CD8-positive, alpha-beta T cell (primary cell): ENCODE measurements at regions of chr2 and their contacts with region 1.

Region 1: DNA sequence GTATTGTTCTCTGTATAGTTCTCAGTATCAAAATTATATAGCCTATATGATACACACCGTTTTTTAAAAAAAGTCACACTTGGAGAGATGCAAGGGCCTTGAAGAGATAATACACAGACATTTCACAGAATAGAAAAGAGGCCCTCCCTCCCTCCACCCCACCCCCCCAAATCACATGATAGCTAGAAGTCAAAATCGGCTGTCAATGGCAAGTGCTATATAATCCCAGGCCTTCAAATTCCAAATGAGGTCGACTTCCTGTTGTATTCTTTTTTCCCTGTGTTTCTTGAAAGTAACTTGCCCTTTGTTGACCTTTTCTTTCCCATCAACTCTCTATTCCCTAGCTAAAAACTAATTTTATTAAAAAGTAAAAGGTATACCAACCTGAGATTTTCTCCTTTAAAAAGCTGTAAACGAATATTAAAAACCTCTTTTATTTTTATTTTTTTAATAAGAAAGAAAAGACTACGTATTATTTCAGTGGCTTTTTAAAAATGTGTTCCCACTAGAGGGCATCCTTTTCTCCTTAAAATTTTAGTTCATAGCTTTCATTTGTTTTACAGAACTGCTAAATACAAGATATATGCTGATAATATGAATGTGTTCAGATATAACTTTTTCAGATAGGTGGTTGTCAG is 46.6 kb downstream of the KCMF1 start:
- DNase-seq: peak in 2 of 9 experiments; percentile 23 to 39
- ATAC-seq: no peak
- H3K4me3 ChIP-seq: no peak overlapping the region
- H3K4me3 Mint-ChIP-seq: no peak overlapping the region
- H3K27ac ChIP-seq: no peak overlapping the region
- H3K27ac Mint-ChIP-seq: peak overlapping the region; percentile 64
- H3K4me1 ChIP-seq: peaks cover 15% of the 10 kb centered on the region
- H3K4me1 Mint-ChIP-seq: peaks cover 69% of the 10 kb centered on the region
- H3K27me3 ChIP-seq: no peaks in the 10 kb centered on the region
- H3K27me3 Mint-ChIP-seq: no peaks in the 10 kb centered on the region
- CTCF ChIP-seq: peak; percentile 56

Region 2: GRCh38 chr2:84946204-84947009 is 71.1 kb before region 1 on chr2:
- CTCF ChIA-PET with region 1: interaction called, 10 read pairs
- POLR2A ChIA-PET with region 1: no interaction called
- intact Hi-C with region 1: no loop called
- DNase-seq: peak in 8 of 9 experiments; percentile 30 to 81 (median 62)
- ATAC-seq: peak; percentile 87
- H3K4me3 ChIP-seq: peak overlapping the region; percentile 20 to 27
- H3K4me3 Mint-ChIP-seq: peak overlapping the region; percentile 75
- H3K27ac ChIP-seq: peak overlapping the region; percentile 1 to 76
- H3K27ac Mint-ChIP-seq: peak overlapping the region; percentile 90
- H3K4me1 ChIP-seq: peaks cover 22% of the 10 kb centered on the region
- H3K4me1 Mint-ChIP-seq: peaks cover 24% of the 10 kb centered on the region
- H3K27me3 ChIP-seq: no peaks in the 10 kb centered on the region
- H3K27me3 Mint-ChIP-seq: no peaks in the 10 kb centered on the region
- CTCF ChIP-seq: no peak

Region 3: GRCh38 chr2:85291425-85292023 is 274.0 kb after region 1 on chr2:
- CTCF ChIA-PET with region 1: no interaction called
- POLR2A ChIA-PET with region 1: no interaction called
- intact Hi-C with region 1: no loop called
- DNase-seq: peak in 2 of 9 experiments; percentile 57 to 77
- ATAC-seq: peak; percentile 44
- H3K4me3 ChIP-seq: no peak overlapping the region
- H3K4me3 Mint-ChIP-seq: peak overlapping the region; percentile 24
- H3K27ac ChIP-seq: peak overlapping the region in 1 of 2 experiments; percentile 60
- H3K27ac Mint-ChIP-seq: peak overlapping the region; percentile 73
- H3K4me1 ChIP-seq: peaks cover 10% of the 10 kb centered on the region
- H3K4me1 Mint-ChIP-seq: peaks cover 19% of the 10 kb centered on the region
- H3K27me3 ChIP-seq: no peaks in the 10 kb centered on the region
- H3K27me3 Mint-ChIP-seq: no peaks in the 10 kb centered on the region
- CTCF ChIP-seq: no peak